CD4-positive, alpha-beta memory T cell (primary cell): ENCODE measurements at regions of chr15 and their contacts with region 1.

Region 1: GRCh38 chr15:72375847-72376581 is at the start of gene HEXA:
- DNase-seq: peak; percentile 95 to 96 (median 96)
- H3K4me3 ChIP-seq: peak within 1 kb of the TSS; percentile 45 to 95
- H3K4me3 Mint-ChIP-seq: peak within 1 kb of the TSS; percentile 89 to 99 (median 94)
- H3K27ac ChIP-seq: peak within 1 kb of the TSS; percentile 79
- H3K27ac Mint-ChIP-seq: peak within 1 kb of the TSS; percentile 93 to 99 (median 98)
- H3K4me1 ChIP-seq: peaks cover 39% of the 10 kb centered on the region
- H3K4me1 Mint-ChIP-seq: peaks cover 35 to 70% (median 49%) of the 10 kb centered on the region in 4 donors
- H3K27me3 ChIP-seq: no peaks in the 10 kb centered on the region
- H3K27me3 Mint-ChIP-seq: no peaks in the 10 kb centered on the region
- total RNA-seq, gene HEXA: 84.4 to 84.6 TPM

Region 2: DNA sequence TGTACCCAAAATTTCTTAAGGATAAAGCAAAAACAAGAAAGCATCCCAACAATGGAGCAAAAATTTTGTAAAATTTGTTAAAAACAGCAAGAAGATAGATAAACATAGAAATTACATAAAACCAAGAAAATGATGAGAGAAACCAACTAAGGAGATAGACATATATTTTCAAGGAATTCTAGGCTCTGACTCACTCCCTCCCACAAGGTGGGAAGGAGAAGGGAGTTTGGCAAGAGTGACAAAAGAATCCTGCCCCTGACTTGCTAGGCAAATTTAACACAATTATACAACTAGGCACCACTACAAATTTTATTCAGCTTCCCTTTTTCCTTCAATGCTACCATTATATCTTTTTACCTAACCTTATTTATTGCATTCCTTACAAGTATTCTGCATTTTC is 329.0 kb before region 1 on chr15:
- CTCF ChIA-PET with region 1: no interaction called
- POLR2A ChIA-PET with region 1: no interaction called
- intact Hi-C with region 1: no loop called
- DNase-seq: no peak
- H3K4me3 ChIP-seq: no peak overlapping the region
- H3K4me3 Mint-ChIP-seq: no peak overlapping the region
- H3K27ac ChIP-seq: no peak overlapping the region
- H3K27ac Mint-ChIP-seq: no peak overlapping the region
- H3K4me1 ChIP-seq: no peaks in the 10 kb centered on the region
- H3K4me1 Mint-ChIP-seq: peaks cover 8 to 19% (median 10%) of the 10 kb centered on the region in 4 donors
- H3K27me3 ChIP-seq: no peaks in the 10 kb centered on the region
- H3K27me3 Mint-ChIP-seq: no peaks in the 10 kb centered on the region

Region 3: GRCh38 chr15:72231066-72231846 is 144.8 kb before region 1 on chr15 and contains the start of gene PKM:
- CTCF ChIA-PET with region 1: no interaction called
- POLR2A ChIA-PET with region 1: interaction called, 24 read pairs
- intact Hi-C with region 1: no loop called
- DNase-seq: peak; percentile 88 to 90 (median 89)
- H3K4me3 ChIP-seq: peak within 1 kb of the TSS; percentile 68 to 92
- H3K4me3 Mint-ChIP-seq: peak within 1 kb of the TSS; percentile 95 to 99 (median 98)
- H3K27ac ChIP-seq: peak within 1 kb of the TSS; percentile 96
- H3K27ac Mint-ChIP-seq: peak within 1 kb of the TSS; percentile 94 to 100 (median 97)
- H3K4me1 ChIP-seq: peaks cover 42% of the 10 kb centered on the region
- H3K4me1 Mint-ChIP-seq: peaks cover 35 to 70% (median 50%) of the 10 kb centered on the region in 4 donors
- H3K27me3 ChIP-seq: no peaks in the 10 kb centered on the region
- H3K27me3 Mint-ChIP-seq: peaks cover 0 to 4% of the 10 kb centered on the region in 2 donors
- total RNA-seq, gene PKM: 378 to 383 TPM

Region 4: DNA sequence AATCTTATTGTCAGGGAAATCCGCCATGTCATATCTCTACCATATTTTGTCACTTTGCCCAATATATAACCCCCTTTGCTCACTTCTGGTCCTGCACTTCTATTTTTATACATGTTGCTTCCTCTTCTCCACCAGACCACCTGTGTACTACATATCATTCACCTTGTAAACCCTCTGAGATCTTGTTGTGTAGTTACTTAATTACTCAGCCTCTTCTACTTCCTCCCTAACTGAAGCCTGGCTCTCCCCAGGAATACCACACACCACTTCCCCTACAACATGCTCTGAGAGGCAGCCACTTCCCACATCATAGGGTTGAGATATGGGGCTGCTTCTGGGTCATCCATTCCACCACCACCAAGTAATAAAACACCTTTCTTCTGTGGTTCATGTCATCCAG is 10.2 kb before region 1 on chr15:
- CTCF ChIA-PET with region 1: no interaction called
- POLR2A ChIA-PET with region 1: interaction called, 28 read pairs
- intact Hi-C with region 1: no loop called
- DNase-seq: peak; percentile 32 to 68 (median 54)
- H3K4me3 ChIP-seq: no peak overlapping the region
- H3K4me3 Mint-ChIP-seq: peak overlapping the region in 6 of 8 donors; percentile 0 to 54 (median 12)
- H3K27ac ChIP-seq: no peak overlapping the region
- H3K27ac Mint-ChIP-seq: peak overlapping the region in 4 of 7 donors; percentile 1 to 29 (median 12)
- H3K4me1 ChIP-seq: peaks cover 27% of the 10 kb centered on the region
- H3K4me1 Mint-ChIP-seq: peaks cover 29 to 45% (median 33%) of the 10 kb centered on the region in 4 donors
- H3K27me3 ChIP-seq: no peaks in the 10 kb centered on the region
- H3K27me3 Mint-ChIP-seq: no peaks in the 10 kb centered on the region

Region 5: GRCh38 chr15:72473614-72474465 is 97.8 kb after region 1 on chr15 and contains the start of gene ARIH1:
- CTCF ChIA-PET with region 1: interaction called, 3 read pairs
- POLR2A ChIA-PET with region 1: interaction called, 90 read pairs
- intact Hi-C with region 1: loop called (anchors 1 kb)
- DNase-seq: peak; percentile 93 to 97 (median 96)
- H3K4me3 ChIP-seq: peak within 1 kb of the TSS; percentile 64 to 78
- H3K4me3 Mint-ChIP-seq: peak within 1 kb of the TSS; percentile 94 to 99 (median 97)
- H3K27ac ChIP-seq: peak within 1 kb of the TSS; percentile 100
- H3K27ac Mint-ChIP-seq: peak within 1 kb of the TSS; percentile 97 to 100 (median 99)
- H3K4me1 ChIP-seq: peaks cover 48% of the 10 kb centered on the region
- H3K4me1 Mint-ChIP-seq: peaks cover 29 to 64% (median 43%) of the 10 kb centered on the region in 4 donors
- H3K27me3 ChIP-seq: no peaks in the 10 kb centered on the region
- H3K27me3 Mint-ChIP-seq: no peaks in the 10 kb centered on the region
- total RNA-seq, gene ARIH1: 203 to 210 TPM

Region 6: GRCh38 chr15:72685925-72686794 is 310.1 kb after region 1 on chr15 and contains the starts of genes BBS4 and HIGD2B:
- CTCF ChIA-PET with region 1: no interaction called
- POLR2A ChIA-PET with region 1: interaction called, 7 read pairs
- intact Hi-C with region 1: loop called (anchors 5 kb)
- DNase-seq: peak; percentile 81 to 86 (median 83)
- H3K4me3 ChIP-seq: peak within 1 kb of the TSS; percentile 95 to 97
- H3K4me3 Mint-ChIP-seq: peak within 1 kb of the TSS; percentile 94 to 99 (median 98)
- H3K27ac ChIP-seq: peak within 1 kb of the TSS; percentile 76
- H3K27ac Mint-ChIP-seq: peak within 1 kb of the TSS; percentile 88 to 99 (median 97)
- H3K4me1 ChIP-seq: peaks cover 15% of the 10 kb centered on the region
- H3K4me1 Mint-ChIP-seq: peaks cover 10 to 21% (median 16%) of the 10 kb centered on the region in 4 donors
- H3K27me3 ChIP-seq: no peaks in the 10 kb centered on the region
- H3K27me3 Mint-ChIP-seq: no peaks in the 10 kb centered on the region
- total RNA-seq, gene BBS4: 19.1 to 22.2 TPM
- total RNA-seq, gene HIGD2B: 0.39 to 0.41 TPM